H1 (cell line): ENCODE measurements at regions of chr6 and their contacts with region 1.

Region 1: DNA sequence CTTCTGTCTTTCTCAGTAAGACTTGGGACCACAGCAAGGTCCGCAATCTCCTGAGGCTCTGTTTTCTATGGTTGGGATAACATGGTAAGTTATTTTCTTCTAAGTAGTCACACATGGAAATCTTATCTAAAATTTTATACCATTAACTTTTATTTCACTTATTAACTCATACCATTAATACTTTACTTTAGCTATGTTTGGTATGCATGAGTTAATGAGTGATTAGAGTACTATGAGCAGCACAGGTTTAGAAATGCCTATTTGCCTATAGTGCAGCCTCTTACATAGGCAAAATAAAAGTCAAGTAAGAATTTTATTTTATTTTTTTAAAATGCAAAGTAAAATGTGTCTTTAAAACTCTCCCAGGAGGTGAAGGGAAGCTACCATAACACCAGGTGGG is 27.3 kb downstream of the GINM1 start:
- DNase-seq: no peak
- H3K4me3 ChIP-seq: no peak overlapping the region
- H3K27ac ChIP-seq: no peak overlapping the region
- H3K4me1 ChIP-seq: no peaks in the 10 kb centered on the region
- H3K27me3 ChIP-seq: no peaks in the 10 kb centered on the region
- CTCF ChIP-seq: no peak
- EP300 ChIP-seq: no peak
- POLR2A ChIP-seq: no peak
- RAD21 ChIP-seq: no peak

Region 2: DNA sequence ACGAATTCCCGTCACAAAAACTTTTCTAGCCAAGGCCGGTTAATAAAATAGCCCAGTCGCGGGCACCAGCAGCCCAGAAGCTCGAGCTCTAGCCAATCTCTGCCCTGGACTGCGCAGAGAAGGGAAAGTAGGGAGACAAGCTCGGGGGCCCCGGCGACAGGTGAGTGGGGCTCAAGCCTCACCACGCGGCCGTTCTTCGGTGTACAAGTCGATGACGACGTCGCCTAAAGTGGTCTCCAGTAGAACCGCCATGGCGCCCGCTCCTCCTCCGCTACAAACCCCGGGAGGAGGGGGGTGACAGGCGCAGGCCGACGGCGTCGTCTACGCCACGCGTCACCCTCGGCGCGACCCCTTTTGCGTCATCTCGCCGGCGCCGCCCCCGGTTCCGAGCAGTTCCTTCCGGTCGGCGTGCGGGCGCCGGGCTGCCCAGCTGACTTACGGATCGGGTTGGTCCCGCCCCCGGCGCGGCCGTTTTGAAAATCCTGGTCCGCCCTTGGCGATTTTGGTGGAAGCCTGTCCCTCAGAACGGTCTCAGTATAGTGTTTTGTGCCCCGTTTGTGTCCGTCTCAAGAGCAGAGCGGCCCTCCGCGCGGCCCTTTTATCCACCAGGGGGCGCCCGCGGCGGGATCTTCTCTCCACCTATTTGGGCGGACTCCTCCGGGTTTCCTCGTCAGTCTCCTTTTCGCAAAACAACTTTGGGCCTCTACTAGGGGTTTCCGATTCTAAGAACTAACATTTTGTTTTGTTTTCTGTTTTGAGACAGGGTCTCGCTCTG is 47.5 kb before region 1 on chr6 and contains the start of gene PPIL4:
- CTCF ChIA-PET with region 1: no interaction called
- POLR2A ChIA-PET with region 1: no interaction called
- DNase-seq: peak; percentile 72 to 98
- H3K4me3 ChIP-seq: peak within 1 kb of the TSS; percentile 86 to 98 (median 94)
- H3K27ac ChIP-seq: peak within 1 kb of the TSS; percentile 88
- H3K4me1 ChIP-seq: no peaks in the 10 kb centered on the region; a peak in 1 of 7 replicates
- H3K27me3 ChIP-seq: no peaks in the 10 kb centered on the region; a peak in 1 of 7 replicates
- CTCF ChIP-seq: peak; percentile 55 to 75 (median 62)
- EP300 ChIP-seq: 0 out of 3 replicates have a peak, but pooled peaks of 1 of the 2 experiments have one; percentile 18
- POLR2A ChIP-seq: peak; percentile 59 to 95
- RAD21 ChIP-seq: peak; percentile 27 to 45; a peak in 3 of 4 replicates
- total RNA-seq, gene PPIL4: 33.2 TPM in 2 replicates

Region 3: DNA sequence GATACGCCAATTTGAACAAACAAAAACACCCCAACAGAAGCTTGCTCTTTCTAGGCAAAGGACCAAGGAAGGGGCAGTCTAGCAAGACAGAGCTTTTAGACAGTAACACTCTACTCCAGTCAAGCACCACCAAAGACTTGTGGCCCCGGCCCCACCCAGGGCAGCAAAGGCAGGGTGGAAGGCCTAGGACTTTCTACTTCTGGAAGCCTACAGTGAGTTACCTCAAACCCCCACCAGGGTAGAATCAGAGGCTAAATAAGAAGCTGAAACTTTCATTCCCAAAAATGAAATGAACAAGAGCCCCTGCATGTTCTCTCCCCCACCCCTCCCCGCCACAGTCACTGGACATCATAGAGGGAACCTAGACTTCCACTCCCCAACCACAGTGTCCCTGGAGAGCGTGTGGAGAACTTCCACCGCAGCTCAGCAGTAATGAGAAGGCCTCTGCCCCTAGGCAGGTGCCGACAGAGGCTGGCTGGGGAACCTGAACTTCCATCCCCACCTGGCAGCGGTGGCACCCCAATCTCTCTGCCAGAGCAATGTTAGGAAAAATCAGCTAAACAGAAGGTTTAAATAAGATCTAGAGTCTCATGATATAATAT is 15.0 kb after region 1 on chr6:
- CTCF ChIA-PET with region 1: interaction called, 12 read pairs
- POLR2A ChIA-PET with region 1: interaction called, 8 read pairs
- DNase-seq: no peak
- H3K4me3 ChIP-seq: no peak overlapping the region
- H3K27ac ChIP-seq: no peak overlapping the region
- H3K4me1 ChIP-seq: no peaks in the 10 kb centered on the region
- H3K27me3 ChIP-seq: no peaks in the 10 kb centered on the region
- CTCF ChIP-seq: no peak
- EP300 ChIP-seq: no peak
- POLR2A ChIP-seq: no peak
- RAD21 ChIP-seq: no peak